Colonic mucosa (tissue), 4 donors: ENCODE measurements at regions of chr1 and their contacts with region 1.

Region 1: DNA sequence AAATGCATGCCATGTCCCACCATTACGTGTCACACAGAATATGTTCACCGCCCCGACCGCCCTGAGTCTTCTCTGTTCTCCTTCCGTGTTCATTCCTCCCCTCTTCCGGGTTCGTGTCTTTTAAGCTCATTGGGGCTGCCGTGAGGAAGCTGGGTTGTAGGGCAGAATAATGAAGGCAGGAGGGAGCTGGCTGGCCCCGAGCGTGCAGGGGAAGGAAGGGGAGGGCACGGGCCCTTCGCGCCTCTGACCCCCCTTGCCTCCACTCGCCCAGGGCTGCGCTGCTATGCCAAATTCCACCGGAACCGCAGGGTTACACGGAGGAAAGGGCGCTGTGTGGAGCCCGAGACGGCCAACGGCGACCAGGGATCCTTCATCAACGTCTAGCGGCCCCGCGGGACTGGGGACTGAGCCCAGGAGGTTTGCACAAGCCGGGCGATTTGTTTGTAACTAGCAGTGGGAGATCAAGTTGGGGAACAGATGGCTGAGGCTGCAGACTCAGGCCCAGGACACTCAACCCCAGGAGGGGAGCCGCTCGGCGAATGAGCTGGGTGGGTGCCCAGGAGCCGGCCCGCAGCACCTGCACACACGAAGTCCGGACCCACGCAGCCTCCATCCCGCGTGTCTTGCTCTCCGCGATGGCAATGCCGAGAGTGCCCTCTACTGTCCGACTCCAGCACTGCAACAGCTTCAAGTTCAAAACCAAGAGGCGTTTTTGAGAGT is 16.5 kb upstream of the AGTRAP start:
- DNase-seq: peak; percentile 87
- H3K4me3 ChIP-seq: peak overlapping the region; percentile 44
- H3K27ac ChIP-seq: peak overlapping the region; percentile 69
- H3K4me1 ChIP-seq: no peaks in the 10 kb centered on the region
- H3K27me3 ChIP-seq: no peaks in the 10 kb centered on the region
- CTCF ChIP-seq: peak; percentile 91

Region 2: GRCh38 chr1:11650331-11650991 is 69.0 kb before region 1 on chr1:
- intact Hi-C with region 1: loop called (anchors 5 kb)
- DNase-seq: peak; percentile 72
- H3K4me3 ChIP-seq: no peak overlapping the region
- H3K27ac ChIP-seq: no peak overlapping the region
- H3K4me1 ChIP-seq: peaks cover 9% of the 10 kb centered on the region
- H3K27me3 ChIP-seq: no peaks in the 10 kb centered on the region
- CTCF ChIP-seq: peak; percentile 68